T-cell (primary cell): ENCODE measurements at regions of chr4 and their contacts with region 1.

Region 1: DNA sequence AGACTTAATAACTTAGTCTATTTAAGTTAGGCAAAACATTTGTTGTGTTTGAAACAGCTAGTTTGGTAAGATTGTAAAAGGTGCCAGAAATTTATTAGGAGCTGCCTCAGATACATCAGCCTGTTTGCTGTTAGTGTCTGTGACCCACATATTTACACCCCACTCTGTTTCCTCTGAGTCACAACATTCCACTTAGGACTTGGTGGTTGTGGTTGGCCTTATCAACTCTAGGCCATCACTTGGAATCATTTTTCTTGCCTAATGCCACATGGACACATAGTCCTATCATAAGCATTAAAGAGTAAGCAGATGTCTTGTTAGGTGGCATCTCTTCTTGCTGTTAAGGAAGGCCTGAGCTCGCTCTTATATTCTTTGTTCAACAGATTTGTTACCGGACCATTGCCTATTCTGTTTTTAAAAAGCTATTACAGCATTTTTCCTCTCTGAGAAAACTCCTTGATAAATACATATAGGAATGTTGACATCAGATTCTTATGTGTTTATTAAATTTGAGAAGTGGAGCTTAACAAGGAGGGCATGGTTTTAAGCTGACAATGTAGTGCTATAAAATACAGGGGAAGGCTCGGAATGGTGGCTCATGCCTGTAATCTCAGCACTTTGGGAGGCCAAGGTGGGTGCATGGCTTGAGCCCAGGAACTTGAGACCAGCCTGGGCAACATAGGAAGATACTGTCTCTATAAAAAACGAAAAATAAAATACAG is 51.2 kb upstream of the PGRMC2 start:
- DNase-seq: no peak
- ATAC-seq: no peak
- H3K4me3 ChIP-seq: no peak overlapping the region
- H3K4me3 Mint-ChIP-seq: no peak overlapping the region
- H3K27ac ChIP-seq: no peak overlapping the region
- H3K27ac Mint-ChIP-seq: no peak overlapping the region
- H3K4me1 ChIP-seq: no peaks in the 10 kb centered on the region
- H3K4me1 Mint-ChIP-seq: no peaks in the 10 kb centered on the region
- H3K27me3 ChIP-seq: no peaks in the 10 kb centered on the region
- H3K27me3 Mint-ChIP-seq: no peaks in the 10 kb centered on the region

Region 2: DNA sequence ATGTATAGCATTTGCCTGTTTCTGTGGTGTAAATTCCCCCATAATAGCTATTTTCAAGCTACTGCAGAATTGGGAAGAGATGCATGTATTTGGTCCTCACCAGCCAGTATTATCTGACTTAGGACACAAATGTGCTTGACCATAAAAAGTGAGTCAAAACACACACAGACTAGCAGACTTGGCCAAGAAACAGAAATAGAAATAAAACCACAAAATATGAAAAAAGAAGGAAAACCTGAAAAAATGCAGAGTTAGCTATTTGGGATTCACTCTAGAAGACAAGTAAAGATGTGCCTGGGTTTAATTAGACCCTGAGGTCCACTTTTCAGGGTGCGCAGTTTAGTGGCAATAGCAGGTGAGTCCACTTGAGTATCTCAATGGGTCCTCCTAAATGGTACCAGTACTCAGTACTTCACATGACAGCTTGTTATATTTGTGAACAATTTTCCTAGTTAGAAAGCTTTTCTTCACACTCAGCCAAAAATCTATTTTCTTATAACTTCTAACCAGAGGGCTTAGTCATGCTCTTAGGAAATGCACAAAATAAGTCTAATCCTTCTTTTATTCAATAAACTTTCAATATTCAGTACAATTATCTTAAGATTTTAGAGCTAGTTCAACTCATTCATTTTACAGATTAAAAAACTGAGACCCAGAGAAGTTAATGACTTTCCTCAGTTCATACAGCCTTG is 362.0 kb after region 1 on chr4:
- CTCF ChIA-PET with region 1: no interaction called
- POLR2A ChIA-PET with region 1: interaction called in 1 of 2 experiments, 10 read pairs
- DNase-seq: no peak
- ATAC-seq: no peak
- H3K4me3 ChIP-seq: no peak overlapping the region
- H3K4me3 Mint-ChIP-seq: no peak overlapping the region
- H3K27ac ChIP-seq: no peak overlapping the region
- H3K27ac Mint-ChIP-seq: no peak overlapping the region
- H3K4me1 ChIP-seq: no peaks in the 10 kb centered on the region
- H3K4me1 Mint-ChIP-seq: no peaks in the 10 kb centered on the region
- H3K27me3 ChIP-seq: no peaks in the 10 kb centered on the region
- H3K27me3 Mint-ChIP-seq: no peaks in the 10 kb centered on the region

Region 3: GRCh38 chr4:129162450-129162849 is 823.7 kb after region 1 on chr4:
- CTCF ChIA-PET with region 1: no interaction called
- POLR2A ChIA-PET with region 1: interaction called in 1 of 2 experiments, 14 read pairs
- DNase-seq: no peak
- ATAC-seq: no peak
- H3K4me3 ChIP-seq: no peak overlapping the region
- H3K4me3 Mint-ChIP-seq: no peak overlapping the region
- H3K27ac ChIP-seq: no peak overlapping the region
- H3K27ac Mint-ChIP-seq: no peak overlapping the region
- H3K4me1 ChIP-seq: no peaks in the 10 kb centered on the region
- H3K4me1 Mint-ChIP-seq: no peaks in the 10 kb centered on the region
- H3K27me3 ChIP-seq: peaks cover 0 to under 1% of the 10 kb centered on the region in 2 experiments
- H3K27me3 Mint-ChIP-seq: peaks cover 17 to 20% of the 10 kb centered on the region in 2 donors